WTC11 (cell line): ENCODE measurements at regions of chr14 and their contacts with region 1.

Region 1: GRCh38 chr14:53055003-53055402 is 98.1 kb downstream of the DDHD1 start:
- DNase-seq: no peak
- ATAC-seq: peak; percentile 60
- H3K4me3 Mint-ChIP-seq: no peak overlapping the region
- H3K27ac Mint-ChIP-seq: no peak overlapping the region
- H3K4me1 Mint-ChIP-seq: no peaks in the 10 kb centered on the region
- H3K27me3 Mint-ChIP-seq: no peaks in the 10 kb centered on the region
- CTCF ChIP-seq: peak; percentile 26

Region 2: GRCh38 chr14:52808101-52808500 is 246.9 kb before region 1 on chr14:
- CTCF ChIA-PET with region 1: no interaction called
- POLR2A ChIA-PET with region 1: no interaction called
- DNase-seq: no peak
- ATAC-seq: no peak
- H3K4me3 Mint-ChIP-seq: no peak overlapping the region
- H3K27ac Mint-ChIP-seq: no peak overlapping the region
- H3K4me1 Mint-ChIP-seq: 0 out of 2 replicates have a peak, but pooled peaks cover 7% of the 10 kb centered on the region
- H3K27me3 Mint-ChIP-seq: no peaks in the 10 kb centered on the region
- CTCF ChIP-seq: no peak

Region 3: DNA sequence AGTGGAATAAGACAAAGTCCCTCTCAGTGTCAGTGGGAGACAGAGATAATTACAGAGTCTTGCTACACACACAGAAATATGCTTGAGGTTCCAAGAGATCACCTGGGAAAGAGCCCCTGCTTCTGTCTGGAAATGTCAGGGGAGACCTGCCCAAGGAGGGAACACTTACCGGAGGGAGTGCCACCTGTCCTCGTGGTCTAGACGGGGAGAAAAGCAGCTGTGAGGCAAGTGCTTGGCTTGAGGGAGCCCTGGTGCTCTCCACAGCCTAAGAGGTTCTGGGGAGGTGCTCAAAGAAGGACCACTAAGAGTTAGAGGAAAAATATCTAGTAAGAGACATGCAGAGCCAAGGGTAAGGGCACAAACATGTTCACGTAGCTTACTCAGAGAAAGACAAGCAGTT is 225.5 kb before region 1 on chr14:
- CTCF ChIA-PET with region 1: no interaction called
- POLR2A ChIA-PET with region 1: no interaction called
- DNase-seq: no peak
- ATAC-seq: no peak; the same call in 1 of the 2 replicates
- H3K4me3 Mint-ChIP-seq: no peak overlapping the region
- H3K27ac Mint-ChIP-seq: peak overlapping the region; percentile 55; the same call in 1 of the 2 replicates
- H3K4me1 Mint-ChIP-seq: peaks cover 42% of the 10 kb centered on the region
- H3K27me3 Mint-ChIP-seq: no peaks in the 10 kb centered on the region
- CTCF ChIP-seq: no peak

Region 4: GRCh38 chr14:53306267-53306721 is 251.3 kb after region 1 on chr14:
- CTCF ChIA-PET with region 1: interaction called, 10 read pairs
- POLR2A ChIA-PET with region 1: no interaction called
- DNase-seq: peak; percentile 53
- ATAC-seq: peak; percentile 89
- H3K4me3 Mint-ChIP-seq: peak overlapping the region; percentile 45
- H3K27ac Mint-ChIP-seq: no peak overlapping the region
- H3K4me1 Mint-ChIP-seq: peaks cover 6% of the 10 kb centered on the region; the same call in 1 of the 2 replicates
- H3K27me3 Mint-ChIP-seq: no peaks in the 10 kb centered on the region; the same call in none of the 2 replicates
- CTCF ChIP-seq: peak; percentile 60